CD4-positive, alpha-beta T cell (primary cell): ENCODE measurements at regions of chr6 and their contacts with region 1.

Region 1: DNA sequence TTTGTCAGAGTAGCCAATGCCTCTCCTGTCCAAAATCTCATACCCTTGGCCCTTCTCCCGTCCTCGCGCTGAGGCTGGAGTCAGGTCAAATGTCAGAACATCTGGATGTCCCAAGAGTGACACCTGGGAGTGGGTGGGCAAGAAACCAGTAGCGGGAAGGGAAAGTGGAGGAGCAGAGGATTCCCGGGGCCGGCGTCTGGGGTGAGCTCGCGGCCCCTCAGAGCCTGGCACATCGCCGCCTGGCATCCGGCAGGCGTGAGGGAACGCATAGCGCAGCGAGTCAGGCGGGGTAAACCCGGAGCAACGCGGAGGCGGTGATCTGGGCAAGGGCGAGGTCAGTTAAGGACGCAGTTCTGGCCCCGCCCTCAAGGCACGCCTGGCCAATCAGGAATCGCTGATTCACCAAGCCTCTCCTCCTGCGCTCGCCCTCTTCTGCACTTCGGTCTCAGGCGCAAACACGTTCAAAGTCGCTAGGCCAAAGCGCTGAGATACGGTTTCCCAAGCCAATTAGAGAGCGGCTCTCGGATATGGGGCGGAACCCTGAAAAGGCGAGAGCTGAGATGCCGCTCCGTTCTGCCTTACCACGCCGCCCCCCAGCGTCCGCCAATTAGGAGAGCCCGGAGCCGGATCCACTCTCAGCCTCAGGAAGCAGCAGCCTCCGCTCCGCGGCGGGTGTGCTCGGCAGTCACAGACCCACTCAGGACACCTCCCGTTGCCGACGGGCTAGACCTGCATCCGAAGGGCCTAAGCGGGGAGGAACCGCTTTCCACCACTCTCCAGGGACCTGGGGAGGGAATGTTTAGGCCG is 22.5 kb downstream of the VPS52 start:
- DNase-seq: peak; percentile 89 to 99 (median 94)
- ATAC-seq: peak; percentile 83
- H3K4me3 ChIP-seq: peak overlapping the region; percentile 70
- H3K4me3 Mint-ChIP-seq: peak overlapping the region; percentile 92
- H3K27ac ChIP-seq: peak overlapping the region; percentile 98
- H3K27ac Mint-ChIP-seq: peak overlapping the region; percentile 97
- H3K4me1 ChIP-seq: peaks cover 32% of the 10 kb centered on the region
- H3K4me1 Mint-ChIP-seq: peaks cover 37% of the 10 kb centered on the region
- H3K27me3 ChIP-seq: no peaks in the 10 kb centered on the region
- H3K27me3 Mint-ChIP-seq: no peaks in the 10 kb centered on the region
- CTCF ChIP-seq: peak; percentile 32

Region 2: DNA sequence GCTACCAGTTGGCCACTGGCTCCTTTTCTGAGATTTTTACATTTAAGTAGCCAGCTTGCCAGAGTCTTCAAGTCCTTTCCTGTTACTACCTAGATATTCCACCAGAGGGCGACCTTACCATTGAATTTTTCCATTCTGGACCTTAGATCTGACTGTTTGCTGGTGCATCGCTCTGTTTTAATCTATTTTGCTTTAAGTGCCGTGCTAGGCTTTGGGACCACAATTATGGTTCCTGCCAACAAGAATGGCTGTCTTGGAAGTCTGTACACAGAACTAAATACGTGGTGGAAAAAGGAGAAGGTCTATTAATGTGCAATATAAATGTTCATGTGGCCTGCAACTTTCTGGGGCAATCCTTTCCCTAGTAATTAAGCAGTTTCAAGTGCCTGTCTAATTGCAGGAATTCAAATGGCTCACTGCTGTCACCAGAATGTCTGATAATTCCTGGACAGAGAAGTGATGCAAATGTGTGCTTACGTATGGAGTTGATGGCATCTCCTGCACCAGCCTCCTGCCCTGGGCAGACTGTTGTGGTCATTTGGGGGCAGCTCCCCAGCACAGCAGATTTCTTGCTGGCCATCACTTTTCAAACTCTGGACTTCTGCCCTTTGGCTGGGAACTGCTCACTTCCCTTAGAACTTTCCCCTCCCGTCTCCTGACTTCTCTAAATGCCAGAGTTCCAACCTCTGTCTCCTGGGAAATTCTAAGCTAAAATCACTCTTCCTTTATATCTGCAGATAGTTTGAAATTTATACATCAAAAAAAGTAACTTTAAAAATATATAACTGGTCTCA is 234.1 kb before region 1 on chr6:
- CTCF ChIA-PET with region 1: interaction called, 35 read pairs
- POLR2A ChIA-PET with region 1: interaction called, 20 read pairs
- intact Hi-C with region 1: loop called (anchors 1 to 2 kb)
- DNase-seq: peak in 9 of 14 experiments; percentile 8 to 88 (median 48)
- ATAC-seq: peak; percentile 78
- H3K4me3 ChIP-seq: no peak overlapping the region
- H3K4me3 Mint-ChIP-seq: no peak overlapping the region
- H3K27ac ChIP-seq: no peak overlapping the region
- H3K27ac Mint-ChIP-seq: no peak overlapping the region
- H3K4me1 ChIP-seq: peaks cover 22% of the 10 kb centered on the region
- H3K4me1 Mint-ChIP-seq: peaks cover 36% of the 10 kb centered on the region
- H3K27me3 ChIP-seq: peaks cover 8 to 10% of the 10 kb centered on the region in 2 experiments
- H3K27me3 Mint-ChIP-seq: peaks cover 5% of the 10 kb centered on the region
- CTCF ChIP-seq: peak; percentile 89

Region 3: DNA sequence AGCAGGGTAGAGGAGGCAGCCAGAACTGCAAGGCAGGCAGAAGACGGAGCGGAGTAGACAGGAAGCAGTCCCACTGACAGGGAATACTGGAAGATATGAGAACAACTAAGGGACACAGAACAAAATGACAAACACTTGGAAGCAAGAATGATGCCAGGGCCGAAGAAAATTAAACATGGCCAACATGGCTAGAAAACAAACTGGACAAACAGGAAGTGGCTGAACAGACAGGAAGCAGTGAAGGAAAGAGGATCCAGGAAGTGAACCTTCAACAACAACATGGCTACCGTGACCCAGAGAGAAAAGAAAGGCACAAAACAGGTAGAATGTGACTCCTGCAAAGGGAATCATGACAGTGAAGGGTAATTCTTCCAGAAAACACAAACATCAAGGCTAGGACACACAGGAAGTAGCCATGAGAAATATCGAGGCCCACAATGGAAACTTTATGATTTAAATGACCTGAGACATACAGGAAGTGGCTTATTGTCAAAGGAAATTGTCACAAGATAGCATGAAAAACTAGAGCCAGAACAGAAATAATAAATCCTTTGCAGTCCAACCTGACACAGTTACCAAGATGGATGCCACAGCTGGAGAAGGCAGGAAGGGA is 66.0 kb before region 1 on chr6:
- CTCF ChIA-PET with region 1: interaction called, 3 read pairs
- POLR2A ChIA-PET with region 1: interaction called, 11 read pairs
- intact Hi-C with region 1: no loop called
- DNase-seq: peak in 2 of 14 experiments; percentile 18 to 59
- ATAC-seq: peak; percentile 63
- H3K4me3 ChIP-seq: no peak overlapping the region
- H3K4me3 Mint-ChIP-seq: peak overlapping the region; percentile 68
- H3K27ac ChIP-seq: no peak overlapping the region
- H3K27ac Mint-ChIP-seq: peak overlapping the region; percentile 83
- H3K4me1 ChIP-seq: peaks cover 24% of the 10 kb centered on the region
- H3K4me1 Mint-ChIP-seq: peaks cover 25% of the 10 kb centered on the region
- H3K27me3 ChIP-seq: no peaks in the 10 kb centered on the region
- H3K27me3 Mint-ChIP-seq: peaks cover 20% of the 10 kb centered on the region
- CTCF ChIP-seq: no peak

Region 4: GRCh38 chr6:33271458-33272274 is 22.5 kb after region 1 on chr6 and contains the starts of genes RPS18 and VPS52:
- CTCF ChIA-PET with region 1: interaction called, 16 read pairs
- POLR2A ChIA-PET with region 1: interaction called, 95 read pairs
- intact Hi-C with region 1: loop called (anchors 1 kb)
- DNase-seq: peak; percentile 83 to 98 (median 89)
- ATAC-seq: peak; percentile 80
- H3K4me3 ChIP-seq: peak within 1 kb of the TSS; percentile 93
- H3K4me3 Mint-ChIP-seq: peak within 1 kb of the TSS; percentile 96
- H3K27ac ChIP-seq: peak within 1 kb of the TSS; percentile 92
- H3K27ac Mint-ChIP-seq: peak within 1 kb of the TSS; percentile 97
- H3K4me1 ChIP-seq: peaks cover 62% of the 10 kb centered on the region
- H3K4me1 Mint-ChIP-seq: peaks cover 70% of the 10 kb centered on the region
- H3K27me3 ChIP-seq: no peaks in the 10 kb centered on the region
- H3K27me3 Mint-ChIP-seq: no peaks in the 10 kb centered on the region
- CTCF ChIP-seq: no peak
- total RNA-seq, gene RPS18: 5,159 to 5,309 TPM
- total RNA-seq, gene VPS52: 67.9 TPM

Region 5: DNA sequence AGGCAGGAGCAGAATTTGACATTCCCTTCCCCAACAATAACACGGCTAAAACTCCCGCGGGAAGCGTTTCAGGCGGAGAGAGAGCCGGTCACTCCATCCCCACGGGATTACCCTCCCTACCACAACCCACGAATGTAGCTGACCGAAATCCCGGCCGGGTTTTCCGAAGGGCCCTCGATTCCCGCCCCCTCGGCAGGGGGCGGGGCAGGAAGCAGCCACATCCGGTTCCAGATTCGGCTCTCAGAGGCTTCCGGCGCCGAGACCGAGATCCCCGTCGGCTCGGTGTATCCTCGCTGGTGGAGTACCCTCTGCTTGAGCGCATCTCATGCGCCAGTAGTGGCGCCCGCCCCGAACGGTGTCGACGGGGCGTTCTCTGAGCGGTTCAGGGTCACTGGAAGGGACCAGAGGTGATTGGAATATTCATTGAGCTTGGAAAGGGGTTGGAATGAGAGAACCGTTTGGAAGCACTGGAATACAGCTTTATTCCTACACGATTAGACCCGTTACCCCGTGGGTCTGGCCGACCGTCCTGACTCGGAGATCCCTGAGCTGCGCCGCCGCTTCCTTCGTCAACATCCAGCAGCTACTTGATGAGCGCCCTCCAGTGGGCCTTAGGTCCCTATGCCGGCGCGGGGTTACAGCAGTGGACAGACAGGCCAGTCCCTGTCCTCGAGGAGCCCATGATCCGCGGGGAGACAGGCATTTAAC is 50.3 kb after region 1 on chr6:
- CTCF ChIA-PET with region 1: interaction called, 3 read pairs
- POLR2A ChIA-PET with region 1: interaction called, 30 read pairs
- intact Hi-C with region 1: no loop called
- DNase-seq: peak; percentile 89 to 97 (median 92)
- ATAC-seq: peak; percentile 84
- H3K4me3 ChIP-seq: peak overlapping the region; percentile 91
- H3K4me3 Mint-ChIP-seq: peak overlapping the region; percentile 98
- H3K27ac ChIP-seq: peak overlapping the region; percentile 90 to 96
- H3K27ac Mint-ChIP-seq: peak overlapping the region; percentile 99
- H3K4me1 ChIP-seq: peaks cover 34% of the 10 kb centered on the region
- H3K4me1 Mint-ChIP-seq: peaks cover 32% of the 10 kb centered on the region
- H3K27me3 ChIP-seq: no peaks in the 10 kb centered on the region
- H3K27me3 Mint-ChIP-seq: no peaks in the 10 kb centered on the region
- CTCF ChIP-seq: peak; percentile 74

Region 6: DNA sequence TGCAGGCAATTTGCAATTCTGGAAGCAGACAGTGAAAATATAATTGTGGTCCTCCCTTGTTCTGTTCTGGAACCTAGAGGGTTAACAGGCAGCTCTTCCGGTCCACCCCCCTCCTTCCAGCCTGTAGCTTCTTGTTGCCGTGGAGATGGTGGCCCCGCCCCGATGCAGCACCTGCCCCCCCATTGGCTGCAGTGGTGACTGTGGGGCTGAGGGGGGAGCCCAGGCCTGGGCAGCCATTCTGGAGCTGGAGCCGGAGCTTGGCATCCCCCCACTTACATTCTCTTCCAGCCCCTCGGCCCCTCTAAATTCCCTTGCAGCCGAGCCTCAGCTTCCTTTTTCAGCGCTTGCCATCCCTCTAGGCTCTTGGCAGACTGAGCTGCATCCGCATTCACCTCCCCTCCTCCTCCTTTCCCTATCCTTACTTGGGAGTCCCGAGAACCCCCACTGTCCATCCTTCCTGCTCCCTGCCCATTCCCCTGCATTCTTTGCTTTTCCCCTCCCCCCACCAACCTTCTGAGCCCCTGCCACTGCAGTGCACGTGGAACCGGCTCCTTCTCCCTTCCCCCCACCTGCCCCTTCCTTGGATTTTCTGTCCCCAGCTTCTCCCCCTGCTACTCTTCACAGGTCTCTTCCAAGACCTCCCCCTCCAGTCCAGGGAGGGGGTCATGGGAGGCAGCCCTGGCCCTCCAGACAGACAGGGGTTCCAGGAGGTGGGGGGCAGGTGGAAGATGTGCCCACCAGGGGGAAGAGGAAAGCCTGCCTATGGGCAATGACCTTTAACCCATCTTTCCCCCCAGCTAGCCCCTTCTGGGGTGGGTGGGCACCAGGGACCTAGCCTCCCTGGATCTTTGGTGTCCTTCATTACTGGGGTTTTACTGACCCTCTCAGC is 182.1 kb after region 1 on chr6:
- CTCF ChIA-PET with region 1: no interaction called
- POLR2A ChIA-PET with region 1: interaction called, 10 read pairs
- intact Hi-C with region 1: no loop called
- DNase-seq: peak; percentile 74 to 92 (median 85)
- ATAC-seq: peak; percentile 66
- H3K4me3 ChIP-seq: peak overlapping the region; percentile 71
- H3K4me3 Mint-ChIP-seq: peak overlapping the region; percentile 93
- H3K27ac ChIP-seq: peak overlapping the region; percentile 52 to 64
- H3K27ac Mint-ChIP-seq: peak overlapping the region; percentile 92
- H3K4me1 ChIP-seq: peaks cover 63% of the 10 kb centered on the region
- H3K4me1 Mint-ChIP-seq: peaks cover 65% of the 10 kb centered on the region
- H3K27me3 ChIP-seq: no peaks in the 10 kb centered on the region
- H3K27me3 Mint-ChIP-seq: no peaks in the 10 kb centered on the region
- CTCF ChIP-seq: no peak